WTC11 (cell line): ENCODE measurements at regions of chr11 and their contacts with region 1.

Region 1: GRCh38 chr11:13772223-13773046 is 104.0 kb downstream of the FAR1 start:
- DNase-seq: no peak
- ATAC-seq: peak; percentile 69
- H3K4me3 Mint-ChIP-seq: no peak overlapping the region
- H3K27ac Mint-ChIP-seq: no peak overlapping the region
- H3K4me1 Mint-ChIP-seq: peaks cover 29% of the 10 kb centered on the region
- H3K27me3 Mint-ChIP-seq: no peaks in the 10 kb centered on the region; the same call in 1 of the 2 replicates
- CTCF ChIP-seq: 0 out of 2 replicates have a peak, but pooled peaks have one; percentile 22

Region 2: GRCh38 chr11:13955971-13956421 is 183.6 kb after region 1 on chr11:
- CTCF ChIA-PET with region 1: interaction called, 19 read pairs
- POLR2A ChIA-PET with region 1: no interaction called
- DNase-seq: peak; percentile 52
- ATAC-seq: peak; percentile 86
- H3K4me3 Mint-ChIP-seq: no peak overlapping the region
- H3K27ac Mint-ChIP-seq: no peak overlapping the region
- H3K4me1 Mint-ChIP-seq: 0 out of 2 replicates have a peak, but pooled peaks cover 3% of the 10 kb centered on the region
- H3K27me3 Mint-ChIP-seq: peaks cover 24% of the 10 kb centered on the region
- CTCF ChIP-seq: peak; percentile 87

Region 3: DNA sequence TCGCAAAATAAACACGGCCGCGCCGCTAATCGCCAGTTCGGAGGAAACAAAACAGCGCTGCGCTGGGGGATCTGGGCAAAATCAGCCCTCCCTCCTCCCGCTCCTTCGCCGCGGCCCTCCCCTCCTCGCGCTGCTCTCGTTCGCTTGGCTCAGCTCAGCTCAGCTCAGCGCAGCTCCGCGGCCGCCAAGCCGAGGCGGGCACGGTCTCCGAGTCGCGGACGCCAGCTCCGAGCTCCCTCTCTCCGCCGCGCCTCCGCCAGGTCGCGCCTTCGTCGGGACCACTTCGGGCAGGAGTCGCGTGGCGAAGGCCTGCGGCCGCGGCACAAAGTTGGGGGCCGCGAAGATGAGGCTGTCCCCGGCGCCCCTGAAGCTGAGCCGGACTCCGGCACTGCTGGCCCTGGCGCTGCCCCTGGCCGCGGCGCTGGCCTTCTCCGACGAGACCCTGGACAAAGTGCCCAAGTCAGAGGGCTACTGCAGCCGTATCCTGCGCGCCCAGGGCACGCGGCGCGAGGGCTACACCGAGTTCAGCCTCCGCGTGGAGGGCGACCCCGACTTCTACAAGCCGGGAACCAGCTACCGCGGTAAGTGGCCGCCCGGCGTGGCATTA is 190.2 kb after region 1 on chr11 and contains the start of gene SPON1:
- CTCF ChIA-PET with region 1: interaction called, 19 read pairs
- POLR2A ChIA-PET with region 1: no interaction called
- DNase-seq: peak; percentile 73
- ATAC-seq: peak; percentile 73
- H3K4me3 Mint-ChIP-seq: peak within 1 kb of the TSS; percentile 83
- H3K27ac Mint-ChIP-seq: no peak within 1 kb of the TSS
- H3K4me1 Mint-ChIP-seq: peaks cover 40% of the 10 kb centered on the region
- H3K27me3 Mint-ChIP-seq: peaks cover 85% of the 10 kb centered on the region
- CTCF ChIP-seq: no peak
- total RNA-seq, gene SPON1: 4.1 to 6.4 TPM (median 4.1 TPM) in 3 replicates